ENCODE measurements at regions of chr7 and their contacts with region 1.

Region 1: GRCh38 chr7:42931834-42932651 is at the starts of genes MRPL32 and PSMA2:
- DNase-seq: peak; percentile 91 to 96
- ATAC-seq: peak; percentile 100
- H3K4me3 ChIP-seq: peak within 1 kb of the TSS; percentile 68 to 97 (median 90)
- H3K27ac ChIP-seq: peak within 1 kb of the TSS; percentile 71 to 93 (median 82)
- H3K4me1 ChIP-seq: peaks cover 5 to 64% (median 45%) of the 10 kb centered on the region in 9 donors
- H3K27me3 ChIP-seq: no peaks in the 10 kb centered on the region
- CTCF ChIP-seq: no peak
- total RNA-seq, gene MRPL32: 45.7 to 78.0 (median 57.0) TPM
- total RNA-seq, gene PSMA2: 66.3 to 103 (median 77.1) TPM

Region 2: DNA sequence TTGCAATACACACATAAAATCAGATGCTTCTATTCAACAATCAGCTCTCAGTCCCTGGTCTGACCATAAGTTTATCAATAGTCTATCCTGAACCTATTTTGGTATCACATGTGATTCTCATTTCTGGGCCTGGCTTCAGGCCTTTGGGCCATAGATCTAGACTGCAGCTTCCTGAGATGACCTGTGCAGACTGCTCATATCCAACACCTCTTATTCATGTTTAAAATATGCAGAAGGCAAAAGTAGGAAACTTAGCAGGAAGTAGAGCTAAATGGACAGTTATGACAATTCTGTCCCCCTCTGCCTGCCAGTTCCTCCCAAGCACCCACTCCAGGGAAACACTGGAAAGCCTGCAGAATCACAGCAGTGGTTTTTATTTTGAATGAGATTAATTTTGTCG is 73.5 kb before region 1 on chr7:
- intact Hi-C with region 1: no loop called
- DNase-seq: no peak
- ATAC-seq: no peak
- H3K4me3 ChIP-seq: no peak overlapping the region
- H3K27ac ChIP-seq: no peak overlapping the region
- H3K4me1 ChIP-seq: peaks cover 0 to 10% (median 5%) of the 10 kb centered on the region in 9 donors
- H3K27me3 ChIP-seq: peaks cover 0 to 33% (median 21%) of the 10 kb centered on the region in 7 donors
- CTCF ChIP-seq: no peak

Region 3: DNA sequence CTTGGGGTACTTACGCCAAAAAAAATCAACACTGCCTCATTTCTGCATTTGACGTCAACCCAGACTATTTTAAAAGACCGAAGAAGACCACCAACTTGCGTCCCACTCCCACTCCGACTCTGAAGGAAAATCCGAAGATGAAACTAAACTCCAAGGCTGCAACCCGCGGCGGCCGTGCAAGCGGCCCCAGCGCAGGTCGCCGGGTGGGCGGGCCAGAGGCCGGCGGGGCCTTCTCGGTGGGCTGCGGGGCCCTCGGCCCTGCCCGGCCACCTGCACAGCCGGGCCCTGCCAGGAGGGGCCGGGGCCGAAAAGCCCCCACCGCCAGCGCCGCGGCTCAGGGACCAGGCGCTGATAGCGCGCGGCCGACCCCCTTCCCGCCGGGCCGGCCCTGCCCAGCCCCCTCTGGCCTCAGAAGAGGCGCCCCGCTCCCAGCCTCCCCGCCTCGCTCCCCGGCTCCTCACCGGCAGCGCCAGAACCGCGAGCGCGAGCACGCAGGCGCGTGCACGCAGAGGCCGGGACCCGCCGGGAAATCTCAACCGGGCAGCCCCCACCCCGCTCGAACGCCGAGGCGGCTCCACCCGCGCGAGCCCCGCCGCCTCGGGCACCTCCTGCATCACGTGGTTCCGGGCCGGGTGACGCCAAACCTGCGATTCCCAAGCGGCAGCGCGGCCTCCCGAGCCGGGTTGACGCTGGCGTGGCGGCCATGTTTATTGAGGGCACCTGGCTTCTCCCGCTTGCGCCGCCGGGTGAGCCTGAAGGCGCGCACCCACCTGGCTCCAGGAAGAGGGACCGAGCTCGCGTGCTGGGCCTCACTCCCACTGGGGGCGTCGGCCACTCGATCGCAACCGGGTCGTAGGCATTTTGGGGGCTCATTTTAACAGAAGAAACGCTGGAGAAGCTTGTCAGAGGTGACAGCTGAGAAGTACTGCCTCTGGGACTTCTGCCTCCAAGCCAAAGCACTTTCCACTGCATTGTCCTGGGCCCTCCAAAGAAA is 20.3 kb before region 1 on chr7 and contains the start of gene C7orf25:
- intact Hi-C with region 1: loop called in 2 of 10 experiments (anchors 2 kb)
- DNase-seq: peak; percentile 95 to 97
- ATAC-seq: peak; percentile 97 to 100 (median 98)
- H3K4me3 ChIP-seq: peak within 1 kb of the TSS; percentile 57 to 84 (median 75)
- H3K27ac ChIP-seq: peak within 1 kb of the TSS; percentile 23 to 90 (median 80)
- H3K4me1 ChIP-seq: peaks cover 0 to 59% (median 18%) of the 10 kb centered on the region in 9 donors
- H3K27me3 ChIP-seq: no peaks in the 10 kb centered on the region
- CTCF ChIP-seq: peak in 1 of 9 donors; percentile 11
- total RNA-seq, gene C7orf25: 1.4 to 4.6 (median 3.3) TPM

Region 4: DNA sequence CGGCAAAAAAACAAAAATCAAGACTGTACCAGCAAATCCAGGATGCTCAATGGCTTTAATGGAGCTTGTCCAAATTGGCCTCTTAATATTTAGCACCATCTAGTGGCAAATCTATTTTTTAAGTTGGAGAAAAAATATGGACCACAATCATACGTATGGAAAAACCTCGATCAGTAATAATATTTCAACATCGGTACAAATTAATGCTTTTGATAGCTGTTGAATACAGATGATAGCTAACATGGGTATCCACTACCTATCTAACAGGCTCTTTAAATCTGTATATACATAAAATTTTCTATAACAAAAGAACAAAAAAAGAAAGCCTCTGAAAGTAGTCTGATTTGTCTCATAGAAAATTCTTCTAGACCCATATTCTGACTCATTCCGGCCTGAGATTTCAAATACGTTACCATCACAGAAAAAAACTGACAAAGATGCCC is 768.0 kb after region 1 on chr7:
- intact Hi-C with region 1: loop called in 1 of 10 experiments (anchors 10 kb)
- DNase-seq: no peak
- ATAC-seq: peak in 7 of 8 donors; percentile 49 to 83 (median 60)
- H3K4me3 ChIP-seq: no peak overlapping the region
- H3K27ac ChIP-seq: no peak overlapping the region
- H3K4me1 ChIP-seq: peaks cover 0 to 30% (median 7%) of the 10 kb centered on the region in 9 donors
- H3K27me3 ChIP-seq: no peaks in the 10 kb centered on the region
- CTCF ChIP-seq: peak; percentile 50 to 87 (median 76)

Region 5: DNA sequence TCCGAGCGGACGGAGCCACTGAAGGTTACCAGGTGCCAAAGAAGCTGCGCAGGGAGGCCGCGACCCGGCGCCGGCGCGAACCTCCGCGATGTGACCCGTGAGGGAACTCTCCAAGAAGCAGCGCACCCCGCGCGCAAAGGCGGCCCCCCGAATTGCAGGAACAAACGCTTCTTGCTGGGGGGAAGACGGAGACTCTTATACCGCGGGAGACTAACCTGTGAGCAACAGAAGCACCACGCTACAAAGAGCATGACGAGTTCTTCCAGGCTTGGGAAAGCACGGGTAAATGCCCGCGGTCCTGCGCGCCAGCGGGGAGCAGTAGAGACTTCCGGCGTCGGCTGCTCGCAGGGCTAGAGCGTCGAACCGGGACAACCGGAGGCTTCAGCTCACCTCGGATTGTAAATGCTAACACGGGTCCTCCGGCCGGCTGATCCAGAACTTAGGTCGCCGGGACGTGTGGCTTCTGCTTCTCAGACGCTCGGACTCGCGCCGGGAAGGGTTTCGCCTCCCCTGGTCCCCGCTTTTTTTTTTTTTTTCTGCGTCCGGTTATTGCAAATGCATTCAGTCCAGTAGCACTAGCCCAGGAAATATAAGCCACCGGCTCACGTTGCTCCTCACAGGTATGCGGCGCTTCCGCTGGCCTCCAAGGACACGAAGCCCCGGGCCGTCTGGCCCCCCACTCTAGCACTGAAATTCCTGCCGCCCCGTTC is 797.3 kb after region 1 on chr7 and contains the start of gene COA1:
- intact Hi-C with region 1: loop called in 1 of 10 experiments (anchors 10 kb)
- DNase-seq: peak; percentile 86 to 89
- ATAC-seq: peak; percentile 98 to 99 (median 99)
- H3K4me3 ChIP-seq: peak within 1 kb of the TSS; percentile 76 to 94 (median 84)
- H3K27ac ChIP-seq: peak within 1 kb of the TSS; percentile 70 to 96 (median 92)
- H3K4me1 ChIP-seq: peaks cover 0 to 40% (median 30%) of the 10 kb centered on the region in 9 donors
- H3K27me3 ChIP-seq: no peaks in the 10 kb centered on the region
- CTCF ChIP-seq: peak in 3 of 9 donors; percentile 14 to 27 (median 20)
- total RNA-seq, gene COA1: 64.5 to 83.1 (median 75.4) TPM

Region 6: GRCh38 chr7:43824963-43825362 is 892.9 kb after region 1 on chr7:
- intact Hi-C with region 1: loop called in 2 of 10 experiments (anchors 10 kb)
- DNase-seq: no peak
- ATAC-seq: no peak
- H3K4me3 ChIP-seq: no peak overlapping the region
- H3K27ac ChIP-seq: no peak overlapping the region
- H3K4me1 ChIP-seq: no peaks in the 10 kb centered on the region
- H3K27me3 ChIP-seq: peaks cover 0 to 31% (median 9%) of the 10 kb centered on the region in 7 donors
- CTCF ChIP-seq: no peak